ENCODE measurements at regions of chr13 and their contacts with region 1.

Region 1: GRCh38 chr13:98853771-98854221 is 101.3 kb upstream of the SLC15A1 start:
- DNase-seq: peak; percentile 59
- H3K4me3 Mint-ChIP-seq: peak overlapping the region; percentile 36
- H3K27ac Mint-ChIP-seq: peak overlapping the region; percentile 13
- H3K4me1 Mint-ChIP-seq: peaks cover 21% of the 10 kb centered on the region
- H3K27me3 Mint-ChIP-seq: no peaks in the 10 kb centered on the region

Region 2: DNA sequence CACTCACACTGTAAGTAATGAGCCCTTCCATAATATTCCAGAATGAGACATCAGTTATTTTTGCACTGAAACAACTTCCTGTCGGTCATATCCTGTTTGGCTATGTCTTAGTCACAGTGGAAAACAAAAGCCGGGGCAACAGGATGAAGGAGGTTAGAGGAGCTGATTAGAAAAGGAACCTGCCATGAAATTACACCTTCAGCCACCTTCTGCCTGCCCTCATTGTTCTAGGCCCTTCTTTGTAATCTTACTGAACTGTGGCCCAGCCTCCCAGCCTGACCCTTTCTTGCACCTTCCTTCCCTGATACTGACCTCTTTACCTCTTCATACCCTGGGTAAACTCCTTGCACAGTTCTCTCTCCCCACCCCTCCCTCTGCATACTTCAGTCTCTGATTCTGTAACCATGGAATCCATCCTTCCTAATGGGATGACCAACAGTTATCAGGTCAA is 56.7 kb after region 1 on chr13:
- intact Hi-C with region 1: loop called (anchors 1 kb)
- DNase-seq: peak; percentile 49
- H3K4me3 Mint-ChIP-seq: peak overlapping the region; percentile 35
- H3K27ac Mint-ChIP-seq: peak overlapping the region; percentile 97
- H3K4me1 Mint-ChIP-seq: peaks cover 56% of the 10 kb centered on the region
- H3K27me3 Mint-ChIP-seq: no peaks in the 10 kb centered on the region

Region 3: DNA sequence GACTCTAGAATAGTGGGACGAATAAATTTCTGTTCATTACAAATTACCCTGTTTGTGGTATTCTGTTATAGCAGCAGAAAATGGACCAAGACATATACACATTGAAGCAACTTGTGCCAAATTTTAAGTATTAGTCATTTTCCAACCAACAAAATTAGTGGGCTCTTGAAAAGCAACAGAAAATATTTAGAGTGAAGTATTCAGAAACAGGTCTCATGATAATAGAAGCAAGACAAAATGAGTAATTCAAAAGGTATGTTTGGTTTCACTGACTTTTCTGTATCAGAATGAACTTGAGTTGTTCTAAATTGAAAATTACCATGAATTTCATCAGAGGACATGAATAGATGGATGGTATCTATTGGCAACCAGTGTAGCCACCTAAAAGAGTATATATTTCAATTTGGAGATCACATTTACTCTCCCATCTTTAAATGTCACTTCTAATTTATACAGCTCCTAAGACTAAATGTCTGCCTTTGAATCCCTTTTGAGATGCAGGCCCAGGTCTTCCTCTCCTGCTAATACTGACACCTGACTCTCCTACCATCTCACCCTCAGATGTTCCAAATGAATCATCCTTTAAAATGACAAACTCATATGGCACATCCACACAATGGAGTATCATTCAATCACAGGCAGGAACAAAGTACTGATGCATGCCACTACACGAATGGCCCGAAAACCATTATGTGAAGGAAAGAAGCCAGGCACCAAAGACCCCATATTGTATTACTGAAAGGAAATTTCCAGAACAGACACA is 164.8 kb after region 1 on chr13:
- intact Hi-C with region 1: no loop called
- DNase-seq: no peak
- H3K4me3 Mint-ChIP-seq: no peak overlapping the region
- H3K27ac Mint-ChIP-seq: peak overlapping the region; percentile 54
- H3K4me1 Mint-ChIP-seq: peaks cover 46% of the 10 kb centered on the region
- H3K27me3 Mint-ChIP-seq: no peaks in the 10 kb centered on the region

Region 4: DNA sequence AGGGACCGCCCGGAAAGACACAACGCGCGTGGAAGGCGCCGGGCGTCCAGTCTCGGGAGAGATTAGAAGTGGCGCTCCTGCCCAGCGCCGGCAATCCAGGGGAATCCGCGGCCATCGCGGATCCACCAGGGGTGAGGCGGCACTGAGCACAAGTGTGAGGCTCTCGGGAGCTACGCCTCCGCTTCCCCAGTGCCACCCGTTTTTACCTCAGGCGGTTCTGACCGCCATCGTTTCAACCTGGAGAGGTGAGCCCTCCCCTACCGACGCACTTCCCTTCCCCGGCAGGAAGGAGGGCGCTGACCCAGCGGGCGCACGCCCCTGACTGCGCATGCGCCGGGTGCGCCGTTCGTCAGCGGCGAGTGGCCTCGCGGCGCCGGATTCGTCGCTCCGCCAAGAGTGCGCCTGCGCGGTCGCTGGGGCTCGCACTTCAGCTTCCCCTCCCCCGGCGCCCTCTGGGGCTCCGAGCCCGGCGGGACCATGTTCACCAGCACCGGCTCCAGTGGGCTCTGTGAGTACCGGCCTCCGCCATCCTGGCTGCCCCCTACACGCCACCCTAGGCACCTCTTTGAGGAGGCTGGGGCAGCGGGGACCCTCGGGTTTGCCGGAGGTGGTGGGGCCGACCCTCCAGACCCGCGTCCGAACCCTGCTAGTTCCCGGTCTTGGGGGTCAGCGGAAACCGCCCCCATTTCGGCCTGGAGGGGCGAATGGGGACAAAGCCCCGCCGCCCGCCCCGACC is 346.8 kb after region 1 on chr13 and contains the start of gene UBAC2:
- intact Hi-C with region 1: no loop called
- DNase-seq: peak; percentile 97
- H3K4me3 Mint-ChIP-seq: peak within 1 kb of the TSS; percentile 98
- H3K27ac Mint-ChIP-seq: peak within 1 kb of the TSS; percentile 96
- H3K4me1 Mint-ChIP-seq: peaks cover 65% of the 10 kb centered on the region
- H3K27me3 Mint-ChIP-seq: no peaks in the 10 kb centered on the region
- total RNA-seq, gene UBAC2: 52.1 and 56.3 TPM in 2 replicates

Measured in activated T-helper 1 cell treated with anti-CD3 and anti-CD28 coated beads, Interleukin-12 subunit alpha, Interleukin-12 subunit beta, Interleukin-2, Interleukin-4 antibody, amounts not matched to agents 30 ng/mL and 10 ng/mL and 1 ng/mL, durations not matched to agents 14 hours and 24 hours and 36 hours (primary cell).